ENCODE measurements at regions of chr1 and their contacts with region 1.

Region 1: DNA sequence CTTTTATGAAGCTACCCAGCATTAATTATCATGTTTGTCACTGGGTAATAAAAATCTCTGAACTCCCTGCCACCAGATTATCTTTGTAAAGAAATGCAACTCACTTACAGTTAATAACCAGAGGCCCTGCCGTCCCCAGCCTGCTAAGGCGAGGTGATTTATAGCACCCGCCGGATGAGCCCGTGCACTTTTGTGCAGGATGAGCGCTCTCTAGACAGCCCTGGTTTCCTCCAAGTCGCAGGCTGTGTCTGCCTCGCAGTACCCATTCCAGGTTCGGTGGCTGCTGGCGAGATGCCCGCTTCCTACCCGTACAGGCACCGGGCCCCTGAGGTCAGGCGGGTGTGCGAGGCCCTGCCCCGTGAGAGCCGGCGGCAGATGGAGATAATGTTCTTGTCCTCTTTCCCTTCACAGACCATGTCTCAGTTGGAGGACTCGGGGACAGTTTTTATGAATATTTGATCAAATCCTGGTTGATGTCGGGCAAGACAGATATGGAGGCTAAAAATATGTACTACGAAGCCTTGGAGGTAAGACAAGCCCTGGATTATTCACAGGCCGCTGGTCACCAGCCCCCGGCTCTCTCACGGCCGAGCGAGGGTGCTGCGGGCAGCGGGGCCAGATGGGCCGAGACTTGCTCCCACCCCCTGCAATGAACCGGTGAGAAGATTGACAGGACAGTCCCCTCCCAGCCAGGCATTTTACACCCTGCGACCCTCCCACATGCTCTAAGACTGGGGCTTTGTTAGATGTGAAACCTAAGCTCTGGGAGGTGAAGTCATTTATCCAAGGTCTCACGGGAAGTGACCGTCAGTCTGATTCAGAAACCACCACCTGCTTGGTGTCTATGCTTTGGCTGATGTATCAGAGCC is 28.5 kb upstream of the SELENON start:
- DNase-seq: peak; percentile 55
- ATAC-seq: peak; percentile 22
- H3K4me3 Mint-ChIP-seq: no peak overlapping the region
- H3K27ac Mint-ChIP-seq: peak overlapping the region; percentile 15
- H3K4me1 Mint-ChIP-seq: peaks cover 80% of the 10 kb centered on the region
- H3K27me3 Mint-ChIP-seq: no peaks in the 10 kb centered on the region
- CTCF ChIP-seq: no peak

Region 2: GRCh38 chr1:25737130-25737529 is 34.4 kb before region 1 on chr1:
- CTCF ChIA-PET with region 1: no interaction called
- POLR2A ChIA-PET with region 1: no interaction called
- intact Hi-C with region 1: loop called (anchors 5 kb)
- DNase-seq: no peak
- ATAC-seq: no peak
- H3K4me3 Mint-ChIP-seq: no peak overlapping the region
- H3K27ac Mint-ChIP-seq: no peak overlapping the region
- H3K4me1 Mint-ChIP-seq: peaks cover 12% of the 10 kb centered on the region
- H3K27me3 Mint-ChIP-seq: no peaks in the 10 kb centered on the region
- CTCF ChIP-seq: no peak

Region 3: GRCh38 chr1:26021647-26022403 is 250.3 kb after region 1 on chr1 and contains the start of gene EXTL1:
- CTCF ChIA-PET with region 1: no interaction called
- POLR2A ChIA-PET with region 1: no interaction called
- intact Hi-C with region 1: no loop called
- DNase-seq: no peak
- ATAC-seq: no peak
- H3K4me3 Mint-ChIP-seq: no peak within 1 kb of the TSS
- H3K27ac Mint-ChIP-seq: no peak within 1 kb of the TSS
- H3K4me1 Mint-ChIP-seq: peaks cover 13% of the 10 kb centered on the region
- H3K27me3 Mint-ChIP-seq: no peaks in the 10 kb centered on the region
- CTCF ChIP-seq: no peak
- total RNA-seq, gene EXTL1: not detected